B cell (primary cell): ENCODE measurements at regions of chr14 and their contacts with region 1.

Region 1: GRCh38 chr14:77053046-77053841 is 24.7 kb upstream of the IRF2BPL start:
- DNase-seq: peak; percentile 89
- ATAC-seq: peak; percentile 94
- H3K4me3 ChIP-seq: no peak overlapping the region
- H3K4me3 Mint-ChIP-seq: no peak overlapping the region
- H3K27ac ChIP-seq: no peak overlapping the region
- H3K27ac Mint-ChIP-seq: no peak overlapping the region
- H3K4me1 ChIP-seq: peaks cover 11 to 15% of the 10 kb centered on the region in 2 donors
- H3K4me1 Mint-ChIP-seq: peaks cover 7% of the 10 kb centered on the region
- H3K27me3 ChIP-seq: no peaks in the 10 kb centered on the region
- H3K27me3 Mint-ChIP-seq: no peaks in the 10 kb centered on the region
- CTCF ChIP-seq: peak; percentile 95

Region 2: GRCh38 chr14:76812211-76813044 is 240.8 kb before region 1 on chr14 and contains the start of gene ANGEL1:
- CTCF ChIA-PET with region 1: no interaction called
- POLR2A ChIA-PET with region 1: no interaction called
- intact Hi-C with region 1: no loop called
- DNase-seq: peak; percentile 99
- ATAC-seq: peak; percentile 95
- H3K4me3 ChIP-seq: peak within 1 kb of the TSS; percentile 31 to 79 (median 72)
- H3K4me3 Mint-ChIP-seq: peak within 1 kb of the TSS; percentile 90
- H3K27ac ChIP-seq: peak within 1 kb of the TSS; percentile 65 to 84
- H3K27ac Mint-ChIP-seq: peak within 1 kb of the TSS; percentile 99
- H3K4me1 ChIP-seq: peaks cover 20 to 25% of the 10 kb centered on the region in 2 donors
- H3K4me1 Mint-ChIP-seq: peaks cover 28% of the 10 kb centered on the region
- H3K27me3 ChIP-seq: peaks cover 0 to 5% (median 2%) of the 10 kb centered on the region in 4 experiments
- H3K27me3 Mint-ChIP-seq: no peaks in the 10 kb centered on the region
- CTCF ChIP-seq: no peak
- total RNA-seq, gene ANGEL1: 25.2 and 27.3 TPM in 2 replicates

Region 3: DNA sequence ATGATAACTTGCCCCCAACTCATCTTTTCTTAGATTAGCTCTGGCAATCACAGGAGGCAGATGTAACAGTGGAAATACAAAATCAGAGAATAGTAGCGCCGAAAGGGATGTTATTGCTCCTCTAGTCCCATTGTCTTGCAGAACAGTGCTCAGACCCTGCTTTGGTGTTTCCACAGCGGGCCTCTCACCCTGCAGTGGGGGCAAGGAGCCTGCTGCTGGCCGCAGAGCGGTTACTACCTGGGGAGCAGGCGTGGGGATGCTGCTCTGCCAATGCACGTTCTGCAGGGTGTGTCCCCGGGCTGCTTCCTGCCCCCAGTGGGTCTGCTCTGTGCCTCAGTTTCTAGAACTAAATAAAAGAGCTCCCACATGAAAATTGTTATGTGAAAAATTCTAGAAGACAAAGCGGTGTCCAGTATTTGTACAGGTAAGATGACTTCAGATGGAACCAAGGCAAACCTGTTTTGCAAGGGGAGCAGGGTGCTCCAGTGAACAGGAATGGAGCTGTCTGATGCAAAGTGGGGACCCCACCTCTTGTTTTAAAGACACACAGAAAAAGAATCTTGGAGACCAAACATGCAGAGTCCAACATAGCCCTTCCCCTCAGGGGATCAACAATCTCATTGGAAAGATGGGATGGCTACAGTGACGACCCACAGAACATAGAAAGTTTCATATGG is 191.5 kb before region 1 on chr14:
- CTCF ChIA-PET with region 1: no interaction called
- POLR2A ChIA-PET with region 1: no interaction called
- intact Hi-C with region 1: no loop called
- DNase-seq: no peak
- ATAC-seq: no peak
- H3K4me3 ChIP-seq: no peak overlapping the region
- H3K4me3 Mint-ChIP-seq: no peak overlapping the region
- H3K27ac ChIP-seq: no peak overlapping the region
- H3K27ac Mint-ChIP-seq: no peak overlapping the region
- H3K4me1 ChIP-seq: peaks cover 5 to 11% of the 10 kb centered on the region in 2 donors
- H3K4me1 Mint-ChIP-seq: peaks cover 4% of the 10 kb centered on the region
- H3K27me3 ChIP-seq: peaks cover 0 to 10% (median 1%) of the 10 kb centered on the region in 4 experiments
- H3K27me3 Mint-ChIP-seq: peaks cover 35% of the 10 kb centered on the region
- CTCF ChIP-seq: no peak

Region 4: DNA sequence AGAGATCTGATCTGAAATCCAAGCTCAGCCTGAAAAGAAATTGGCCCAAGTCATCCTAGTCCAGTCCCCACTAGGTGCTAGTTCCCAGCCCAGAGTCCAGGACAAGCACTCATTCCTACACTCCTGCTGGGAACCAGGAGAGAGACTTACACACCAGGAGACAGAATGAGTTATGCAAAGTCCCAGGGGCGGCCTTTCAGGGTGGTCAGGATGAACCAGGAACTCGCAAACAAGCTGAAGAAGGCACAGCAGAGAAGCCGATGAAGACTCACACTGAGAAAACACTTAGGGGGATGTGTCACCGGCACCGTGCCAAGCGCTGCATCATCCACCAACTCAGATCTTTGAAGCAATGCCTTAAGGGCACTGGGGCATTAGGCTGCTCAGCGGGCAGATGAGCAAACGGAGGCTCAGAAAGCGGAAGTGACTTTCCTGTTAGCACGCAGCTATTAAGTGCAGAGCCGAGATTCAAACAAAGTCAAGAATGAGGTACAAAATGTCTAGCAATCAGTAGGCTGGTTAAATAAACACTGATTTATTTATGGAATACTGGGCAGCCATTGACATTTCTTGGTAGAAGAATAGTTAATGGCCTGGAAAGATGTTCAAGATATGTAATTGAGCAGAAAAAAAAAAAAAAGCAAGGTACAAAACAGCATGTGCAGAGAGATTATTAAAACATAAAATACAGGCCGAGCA is 148.4 kb before region 1 on chr14:
- CTCF ChIA-PET with region 1: interaction called, 267 read pairs
- POLR2A ChIA-PET with region 1: interaction called, 5 read pairs
- intact Hi-C with region 1: loop called (anchors 1 kb)
- DNase-seq: peak; percentile 91
- ATAC-seq: peak; percentile 83
- H3K4me3 ChIP-seq: peak overlapping the region in 1 of 5 experiments; percentile 36
- H3K4me3 Mint-ChIP-seq: peak overlapping the region; percentile 55
- H3K27ac ChIP-seq: peak overlapping the region; percentile 57 to 76
- H3K27ac Mint-ChIP-seq: peak overlapping the region; percentile 89
- H3K4me1 ChIP-seq: peaks cover 29 to 45% of the 10 kb centered on the region in 2 donors
- H3K4me1 Mint-ChIP-seq: peaks cover 34% of the 10 kb centered on the region
- H3K27me3 ChIP-seq: peaks cover 0 to 6% (median 0%) of the 10 kb centered on the region in 4 experiments
- H3K27me3 Mint-ChIP-seq: no peaks in the 10 kb centered on the region
- CTCF ChIP-seq: no peak

Region 5: GRCh38 chr14:76918751-76919543 is 134.3 kb before region 1 on chr14:
- CTCF ChIA-PET with region 1: interaction called, 267 read pairs
- POLR2A ChIA-PET with region 1: interaction called, 9 read pairs
- intact Hi-C with region 1: no loop called
- DNase-seq: no peak
- ATAC-seq: no peak
- H3K4me3 ChIP-seq: no peak overlapping the region
- H3K4me3 Mint-ChIP-seq: no peak overlapping the region
- H3K27ac ChIP-seq: no peak overlapping the region
- H3K27ac Mint-ChIP-seq: no peak overlapping the region
- H3K4me1 ChIP-seq: peaks cover 24 to 25% of the 10 kb centered on the region in 2 donors
- H3K4me1 Mint-ChIP-seq: peaks cover 20% of the 10 kb centered on the region
- H3K27me3 ChIP-seq: peaks cover 0 to 33% (median 5%) of the 10 kb centered on the region in 4 experiments
- H3K27me3 Mint-ChIP-seq: peaks cover 22% of the 10 kb centered on the region
- CTCF ChIP-seq: no peak

Region 6: DNA sequence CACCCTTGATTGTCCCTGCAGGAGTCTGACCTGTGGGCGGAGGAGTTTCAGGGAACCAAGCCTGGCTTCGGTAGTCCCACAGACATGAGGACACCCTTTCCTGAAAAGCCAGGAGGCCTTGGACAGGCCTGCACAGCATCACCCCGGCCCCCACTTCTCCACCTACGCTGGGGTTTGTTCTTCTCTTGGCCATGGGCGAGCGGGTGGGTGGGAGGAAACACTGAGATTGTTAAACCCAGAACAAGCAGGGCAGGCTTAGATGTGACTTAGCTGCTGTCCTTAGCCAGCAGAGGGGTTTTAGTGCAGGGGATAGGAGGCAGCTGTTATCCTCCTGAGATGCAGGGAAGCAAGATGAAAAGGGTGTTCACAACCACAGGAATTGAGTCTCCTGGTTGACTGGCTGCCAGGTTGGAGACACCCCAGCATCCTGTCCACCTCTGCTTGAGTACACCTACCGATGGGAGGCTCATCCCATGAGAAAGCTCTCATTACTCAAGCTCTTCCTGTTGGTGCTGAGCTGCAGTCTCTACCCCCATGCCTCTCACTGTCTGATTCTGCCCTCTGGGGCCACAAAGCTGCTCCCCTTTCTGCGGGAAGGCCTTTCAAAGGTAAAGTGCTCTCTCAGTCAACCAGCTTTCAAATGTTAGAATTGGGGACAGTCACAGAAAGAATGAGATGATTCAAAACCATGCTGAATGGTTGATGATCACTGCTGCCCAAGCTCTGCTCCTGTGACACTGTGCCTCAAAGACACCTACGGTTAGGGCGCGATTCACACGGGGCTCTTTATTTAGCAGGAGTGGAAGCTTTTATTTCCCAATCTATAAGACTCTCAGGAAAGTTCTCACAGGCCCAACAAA is 111.1 kb before region 1 on chr14:
- CTCF ChIA-PET with region 1: interaction called, 63 read pairs
- POLR2A ChIA-PET with region 1: no interaction called
- intact Hi-C with region 1: loop called (anchors 1 kb)
- DNase-seq: no peak
- ATAC-seq: no peak
- H3K4me3 ChIP-seq: no peak overlapping the region
- H3K4me3 Mint-ChIP-seq: no peak overlapping the region
- H3K27ac ChIP-seq: no peak overlapping the region
- H3K27ac Mint-ChIP-seq: no peak overlapping the region
- H3K4me1 ChIP-seq: peaks cover 5% of the 10 kb centered on the region in 2 donors
- H3K4me1 Mint-ChIP-seq: peaks cover 5% of the 10 kb centered on the region
- H3K27me3 ChIP-seq: no peaks in the 10 kb centered on the region
- H3K27me3 Mint-ChIP-seq: no peaks in the 10 kb centered on the region
- CTCF ChIP-seq: no peak

Region 7: GRCh38 chr14:76947078-76947837 is 106.0 kb before region 1 on chr14:
- CTCF ChIA-PET with region 1: interaction called, 63 read pairs
- POLR2A ChIA-PET with region 1: no interaction called
- intact Hi-C with region 1: loop called (anchors 1 kb)
- DNase-seq: peak; percentile 90
- ATAC-seq: peak; percentile 95
- H3K4me3 ChIP-seq: peak overlapping the region in 1 of 5 experiments; percentile 24
- H3K4me3 Mint-ChIP-seq: peak overlapping the region; percentile 64
- H3K27ac ChIP-seq: no peak overlapping the region
- H3K27ac Mint-ChIP-seq: peak overlapping the region; percentile 56
- H3K4me1 ChIP-seq: peaks cover 11 to 15% of the 10 kb centered on the region in 2 donors
- H3K4me1 Mint-ChIP-seq: peaks cover 17% of the 10 kb centered on the region
- H3K27me3 ChIP-seq: no peaks in the 10 kb centered on the region
- H3K27me3 Mint-ChIP-seq: no peaks in the 10 kb centered on the region
- CTCF ChIP-seq: peak; percentile 67

Region 8: GRCh38 chr14:76956316-76957090 is 96.7 kb before region 1 on chr14:
- CTCF ChIA-PET with region 1: interaction called, 24 read pairs
- POLR2A ChIA-PET with region 1: no interaction called
- intact Hi-C with region 1: no loop called
- DNase-seq: peak; percentile 87
- ATAC-seq: peak; percentile 70
- H3K4me3 ChIP-seq: peak overlapping the region; percentile 23 to 64 (median 59)
- H3K4me3 Mint-ChIP-seq: peak overlapping the region; percentile 95
- H3K27ac ChIP-seq: peak overlapping the region; percentile 89 to 94
- H3K27ac Mint-ChIP-seq: peak overlapping the region; percentile 99
- H3K4me1 ChIP-seq: peaks cover 50 to 75% of the 10 kb centered on the region in 2 donors
- H3K4me1 Mint-ChIP-seq: peaks cover 65% of the 10 kb centered on the region
- H3K27me3 ChIP-seq: no peaks in the 10 kb centered on the region
- H3K27me3 Mint-ChIP-seq: no peaks in the 10 kb centered on the region
- CTCF ChIP-seq: no peak

Region 9: DNA sequence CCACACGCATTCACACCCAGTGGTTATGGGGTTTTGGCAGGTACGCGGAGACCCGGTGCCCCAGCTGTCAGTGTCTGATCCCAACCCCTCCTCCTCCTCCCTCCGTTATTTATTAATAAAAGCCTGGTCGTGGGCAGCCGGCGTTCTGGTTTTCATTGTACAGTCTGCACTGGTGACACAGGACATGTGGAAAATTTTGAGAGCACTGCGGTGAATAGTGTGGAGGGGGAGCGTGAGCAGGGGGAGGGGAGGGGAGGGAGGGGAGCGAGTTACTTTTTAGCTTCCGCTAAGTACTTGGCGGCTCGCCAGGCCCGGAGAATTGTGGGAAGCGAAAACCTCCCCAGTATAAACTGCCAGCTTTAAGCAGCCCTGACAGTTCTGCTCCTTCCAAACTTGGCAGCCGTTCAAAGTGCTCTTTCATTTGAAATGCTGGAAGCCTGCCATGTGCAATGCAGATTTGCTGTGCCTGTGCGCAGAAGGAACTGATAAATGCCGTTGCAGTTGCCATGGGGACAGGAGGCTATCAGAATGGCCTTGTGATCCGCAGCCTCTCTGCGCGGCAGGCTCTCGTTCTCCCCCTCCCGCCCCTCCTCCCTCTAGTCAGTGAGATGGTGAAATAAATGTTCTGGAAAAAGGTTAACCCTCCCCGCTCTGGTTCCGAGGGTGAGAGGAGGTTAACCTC is 13.0 kb before region 1 on chr14:
- CTCF ChIA-PET with region 1: interaction called, 25 read pairs
- POLR2A ChIA-PET with region 1: interaction called, 3 read pairs
- intact Hi-C with region 1: no loop called
- DNase-seq: peak; percentile 94
- ATAC-seq: peak; percentile 72
- H3K4me3 ChIP-seq: peak overlapping the region; percentile 11 to 70 (median 56)
- H3K4me3 Mint-ChIP-seq: peak overlapping the region; percentile 88
- H3K27ac ChIP-seq: peak overlapping the region; percentile 89 to 93
- H3K27ac Mint-ChIP-seq: peak overlapping the region; percentile 98
- H3K4me1 ChIP-seq: peaks cover 71 to 86% of the 10 kb centered on the region in 2 donors
- H3K4me1 Mint-ChIP-seq: peaks cover 79% of the 10 kb centered on the region
- H3K27me3 ChIP-seq: no peaks in the 10 kb centered on the region
- H3K27me3 Mint-ChIP-seq: no peaks in the 10 kb centered on the region
- CTCF ChIP-seq: no peak